SK-N-SH (cell line): ENCODE measurements at regions of chr11 and their contacts with region 1.

Region 1: GRCh38 chr11:128776424-128777284 is 82.8 kb downstream of the FLI1 start:
- DNase-seq: peak; percentile 87
- H3K4me3 ChIP-seq: peak overlapping the region in 1 of 2 experiments; percentile 25; a peak in 1 of 4 replicates
- H3K27ac ChIP-seq: peak overlapping the region in 1 of 2 experiments; percentile 64; a peak in 1 of 4 replicates
- H3K4me1 ChIP-seq: peaks cover 0 to 19% of the 10 kb centered on the region in 2 experiments; a peak in 1 of 4 replicates
- H3K27me3 ChIP-seq: no peaks in the 10 kb centered on the region
- CTCF ChIP-seq: peak; percentile 44
- EP300 ChIP-seq: no peak
- RAD21 ChIP-seq: peak; percentile 24

Region 2: DNA sequence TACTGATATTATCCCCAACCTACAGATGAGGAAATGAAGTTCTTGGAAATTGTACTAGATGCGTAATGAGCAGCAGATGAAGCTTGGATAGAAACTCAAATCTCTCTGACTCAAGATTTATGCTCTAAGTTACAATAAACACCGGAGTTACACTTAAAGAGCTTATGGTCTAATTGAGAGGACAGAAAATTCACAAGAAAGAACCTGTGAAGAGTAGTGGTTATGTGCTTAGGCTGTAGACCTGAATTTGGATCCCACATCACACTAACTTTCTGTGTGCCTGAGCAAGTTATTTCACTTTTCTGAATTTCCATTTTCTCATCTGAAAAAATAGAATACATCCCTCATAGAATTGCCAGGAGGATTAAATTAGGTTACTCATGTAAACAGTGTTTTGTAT is 24.3 kb before region 1 on chr11:
- CTCF ChIA-PET with region 1: interaction called, 11 read pairs
- POLR2A ChIA-PET with region 1: no interaction called
- DNase-seq: no peak
- H3K4me3 ChIP-seq: no peak overlapping the region
- H3K27ac ChIP-seq: no peak overlapping the region
- H3K4me1 ChIP-seq: no peaks in the 10 kb centered on the region
- H3K27me3 ChIP-seq: no peaks in the 10 kb centered on the region
- CTCF ChIP-seq: no peak
- EP300 ChIP-seq: no peak
- RAD21 ChIP-seq: no peak

Region 3: DNA sequence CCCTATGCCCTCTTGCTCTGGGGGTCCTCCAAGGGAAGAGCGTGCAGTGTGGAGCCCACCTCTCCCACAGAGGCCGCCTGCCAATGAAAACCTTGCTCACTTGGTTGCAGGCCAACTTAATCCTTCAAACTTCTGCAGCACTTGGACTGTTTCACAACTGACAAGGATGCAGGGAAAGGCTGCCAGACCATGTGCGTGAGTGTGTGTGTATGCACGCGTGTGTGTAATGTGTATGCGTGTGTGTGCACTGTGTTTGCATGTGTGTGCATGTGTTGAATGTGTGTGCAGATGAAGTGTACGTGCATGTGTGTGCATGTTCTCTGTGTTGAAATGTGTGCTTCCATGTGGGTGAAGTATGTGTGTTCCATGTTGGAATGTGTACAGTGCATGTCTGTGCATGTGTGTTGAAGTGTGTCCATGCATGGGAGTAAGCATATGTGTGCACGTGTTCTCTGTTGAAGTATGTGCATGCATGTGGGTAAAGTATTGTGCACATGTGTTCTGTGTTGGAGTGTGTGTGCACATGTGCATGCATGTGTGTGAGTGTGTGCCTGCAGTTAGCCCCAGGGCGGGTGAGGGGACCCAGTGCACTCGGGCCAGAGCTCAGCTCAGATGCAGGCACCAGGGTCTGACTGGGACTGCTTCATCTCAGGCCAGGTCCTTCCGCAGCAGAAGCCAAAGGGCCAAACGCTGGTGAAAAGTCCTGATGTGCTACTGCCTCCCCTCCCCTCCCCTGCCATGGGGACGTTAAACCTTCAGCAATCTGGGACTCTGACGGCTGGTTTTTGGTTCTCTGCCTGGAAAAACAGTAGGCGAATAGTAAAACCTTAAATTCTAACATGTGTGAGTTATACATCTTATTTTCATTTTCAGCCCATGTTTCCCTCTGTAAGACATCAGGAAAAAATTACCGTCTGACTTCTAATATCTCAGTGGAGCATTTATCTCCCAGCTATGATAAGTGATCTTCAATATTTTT is 10.8 kb before region 1 on chr11:
- CTCF ChIA-PET with region 1: interaction called, 29 read pairs
- POLR2A ChIA-PET with region 1: no interaction called
- DNase-seq: peak; percentile 67
- H3K4me3 ChIP-seq: no peak overlapping the region
- H3K27ac ChIP-seq: no peak overlapping the region
- H3K4me1 ChIP-seq: peaks cover 0 to 15% of the 10 kb centered on the region in 2 experiments; a peak in 1 of 4 replicates
- H3K27me3 ChIP-seq: no peaks in the 10 kb centered on the region
- CTCF ChIP-seq: no peak
- EP300 ChIP-seq: no peak
- RAD21 ChIP-seq: no peak

Region 4: GRCh38 chr11:128790196-128790595 is 13.5 kb after region 1 on chr11:
- CTCF ChIA-PET with region 1: interaction called, 11 read pairs
- POLR2A ChIA-PET with region 1: no interaction called
- DNase-seq: no peak
- H3K4me3 ChIP-seq: no peak overlapping the region
- H3K27ac ChIP-seq: peak overlapping the region in 1 of 2 experiments; percentile 69; a peak in 2 of 4 replicates
- H3K4me1 ChIP-seq: peaks cover 0 to 16% of the 10 kb centered on the region in 2 experiments; a peak in 3 of 4 replicates
- H3K27me3 ChIP-seq: no peaks in the 10 kb centered on the region
- CTCF ChIP-seq: no peak
- EP300 ChIP-seq: no peak
- RAD21 ChIP-seq: no peak

Region 5: GRCh38 chr11:128796270-128796669 is 19.6 kb after region 1 on chr11:
- CTCF ChIA-PET with region 1: interaction called, 11 read pairs
- POLR2A ChIA-PET with region 1: no interaction called
- DNase-seq: no peak
- H3K4me3 ChIP-seq: no peak overlapping the region
- H3K27ac ChIP-seq: peak overlapping the region in 1 of 2 experiments; percentile 11; a peak in 1 of 4 replicates
- H3K4me1 ChIP-seq: peaks cover 0 to under 1% of the 10 kb centered on the region in 2 experiments; a peak in 1 of 4 replicates
- H3K27me3 ChIP-seq: no peaks in the 10 kb centered on the region
- CTCF ChIP-seq: no peak
- EP300 ChIP-seq: no peak
- RAD21 ChIP-seq: no peak

Region 6: GRCh38 chr11:128802358-128802981 is 25.8 kb after region 1 on chr11:
- CTCF ChIA-PET with region 1: interaction called, 21 read pairs
- POLR2A ChIA-PET with region 1: no interaction called
- DNase-seq: peak; percentile 65
- H3K4me3 ChIP-seq: peak overlapping the region in 1 of 2 experiments; percentile 40; a peak in 1 of 4 replicates
- H3K27ac ChIP-seq: peak overlapping the region in 1 of 2 experiments; percentile 41; a peak in 1 of 4 replicates
- H3K4me1 ChIP-seq: peaks cover 5 to 14% of the 10 kb centered on the region in 2 experiments; a peak in 2 of 4 replicates
- H3K27me3 ChIP-seq: no peaks in the 10 kb centered on the region
- CTCF ChIP-seq: peak; percentile 63
- EP300 ChIP-seq: no peak
- RAD21 ChIP-seq: peak; percentile 60

Region 7: GRCh38 chr11:128809128-128809527 is 32.5 kb after region 1 on chr11:
- CTCF ChIA-PET with region 1: interaction called, 12 read pairs
- POLR2A ChIA-PET with region 1: no interaction called
- DNase-seq: no peak
- H3K4me3 ChIP-seq: no peak overlapping the region
- H3K27ac ChIP-seq: no peak overlapping the region
- H3K4me1 ChIP-seq: peaks cover 0 to 3% of the 10 kb centered on the region in 2 experiments; a peak in 2 of 4 replicates
- H3K27me3 ChIP-seq: no peaks in the 10 kb centered on the region
- CTCF ChIP-seq: no peak
- EP300 ChIP-seq: no peak
- RAD21 ChIP-seq: no peak